K562 (cell line): ENCODE measurements at regions of chr15 and their contacts with region 1.

Region 1: GRCh38 chr15:79853458-79854328 is 43.1 kb downstream of the MTHFS start:
- DNase-seq: peak; percentile 76 to 88 (median 83)
- ATAC-seq: peak; percentile 99
- H3K4me3 ChIP-seq: no peak overlapping the region
- H3K27ac ChIP-seq: no peak overlapping the region; the same call in 2 of the 3 replicates
- H3K4me1 ChIP-seq: peaks cover 0 to 4% of the 10 kb centered on the region in 2 experiments; a peak in 1 of 5 replicates
- H3K27me3 ChIP-seq: no peaks in the 10 kb centered on the region
- CTCF ChIP-seq: peak; percentile 84 to 96 (median 95)
- EP300 ChIP-seq: 0 out of 2 replicates have a peak, but pooled peaks have one; percentile 48
- POLR2A ChIP-seq: no peak
- RAD21 ChIP-seq: peak; percentile 68 to 76

Region 2: GRCh38 chr15:79608066-79608864 is 245.4 kb before region 1 on chr15:
- CTCF ChIA-PET with region 1: no interaction called
- POLR2A ChIA-PET with region 1: no interaction called
- in situ Hi-C with region 1: no loop called
- intact Hi-C with region 1: loop called (anchors 10 kb)
- DNase-seq: no peak
- ATAC-seq: no peak
- H3K4me3 ChIP-seq: no peak overlapping the region
- H3K27ac ChIP-seq: no peak overlapping the region
- H3K4me1 ChIP-seq: no peaks in the 10 kb centered on the region
- H3K27me3 ChIP-seq: peaks cover 4 to 9% of the 10 kb centered on the region in 2 experiments; a peak in 3 of 5 replicates
- CTCF ChIP-seq: no peak
- EP300 ChIP-seq: no peak
- POLR2A ChIP-seq: no peak
- RAD21 ChIP-seq: no peak

Region 3: DNA sequence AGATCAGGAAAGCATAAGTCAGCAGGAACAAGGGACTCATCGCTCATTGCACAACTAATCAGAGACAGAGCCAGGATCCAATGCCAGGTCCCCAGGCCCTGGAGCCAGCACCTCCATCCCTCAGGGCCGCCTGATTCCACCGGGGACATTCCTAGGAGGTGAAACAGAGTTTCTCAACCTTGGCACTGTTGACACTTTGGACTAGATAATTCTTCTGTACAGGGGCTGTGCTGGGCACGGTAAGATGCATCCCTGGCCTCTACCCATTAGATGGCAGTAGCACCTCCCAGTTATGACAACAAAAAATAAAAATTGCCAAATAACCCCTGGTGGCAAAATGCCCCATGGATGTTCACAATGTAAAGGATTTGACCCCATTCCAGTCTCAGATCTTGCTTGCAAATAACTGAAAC is 84.6 kb before region 1 on chr15:
- CTCF ChIA-PET with region 1: no interaction called
- POLR2A ChIA-PET with region 1: no interaction called
- in situ Hi-C with region 1: no loop called
- intact Hi-C with region 1: loop called (anchors 5 kb)
- DNase-seq: peak in 1 of 4 experiments; percentile 12
- ATAC-seq: peak; percentile 55; the same call in 2 of the 3 replicates
- H3K4me3 ChIP-seq: no peak overlapping the region
- H3K27ac ChIP-seq: no peak overlapping the region
- H3K4me1 ChIP-seq: no peaks in the 10 kb centered on the region
- H3K27me3 ChIP-seq: peaks cover 3 to 21% of the 10 kb centered on the region in 2 experiments; a peak in 4 of 5 replicates
- CTCF ChIP-seq: peak; percentile 36 to 60 (median 60); a peak in 4 of 6 replicates
- EP300 ChIP-seq: no peak
- POLR2A ChIP-seq: no peak
- RAD21 ChIP-seq: peak in 1 of 2 experiments; percentile 59; a peak in 2 of 4 replicates